RWPE1 (cell line): ENCODE measurements at regions of chr12 and their contacts with region 1.

Region 1: DNA sequence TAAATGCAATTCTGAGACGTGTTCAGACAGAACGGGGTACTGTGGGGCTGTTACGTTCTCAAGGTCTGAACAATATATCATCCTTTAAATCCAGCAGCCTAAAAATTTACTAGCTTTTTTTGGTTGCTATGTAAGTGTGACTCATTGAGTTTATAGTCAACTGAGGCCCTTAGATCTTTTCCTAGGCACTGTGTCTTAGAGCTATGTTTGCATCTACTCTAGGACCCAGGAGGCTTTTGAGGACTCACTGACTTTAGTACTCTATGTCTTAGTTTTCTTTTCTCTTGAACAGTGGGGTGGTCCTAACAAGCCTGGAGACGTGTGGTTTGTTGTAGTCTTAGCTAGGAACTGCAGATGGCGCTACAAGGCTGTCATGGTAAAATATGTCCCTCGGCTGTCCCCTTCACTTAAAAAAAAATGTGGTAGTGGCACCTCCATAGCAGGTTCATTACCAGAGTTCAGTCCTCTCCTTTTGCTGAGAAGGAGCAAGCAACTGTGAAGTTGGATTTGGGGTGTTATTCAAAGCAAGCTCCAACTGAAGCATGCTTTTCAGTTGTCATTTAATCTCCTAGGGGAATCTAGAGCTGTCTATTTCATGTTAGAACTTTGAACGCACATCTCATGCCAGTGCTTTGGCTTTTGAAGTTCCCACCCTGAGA is 8.7 kb upstream of the SPATS2 start:
- DNase-seq: no peak
- H3K27ac ChIP-seq: no peak overlapping the region
- CTCF ChIP-seq: peak; percentile 75

Region 2: DNA sequence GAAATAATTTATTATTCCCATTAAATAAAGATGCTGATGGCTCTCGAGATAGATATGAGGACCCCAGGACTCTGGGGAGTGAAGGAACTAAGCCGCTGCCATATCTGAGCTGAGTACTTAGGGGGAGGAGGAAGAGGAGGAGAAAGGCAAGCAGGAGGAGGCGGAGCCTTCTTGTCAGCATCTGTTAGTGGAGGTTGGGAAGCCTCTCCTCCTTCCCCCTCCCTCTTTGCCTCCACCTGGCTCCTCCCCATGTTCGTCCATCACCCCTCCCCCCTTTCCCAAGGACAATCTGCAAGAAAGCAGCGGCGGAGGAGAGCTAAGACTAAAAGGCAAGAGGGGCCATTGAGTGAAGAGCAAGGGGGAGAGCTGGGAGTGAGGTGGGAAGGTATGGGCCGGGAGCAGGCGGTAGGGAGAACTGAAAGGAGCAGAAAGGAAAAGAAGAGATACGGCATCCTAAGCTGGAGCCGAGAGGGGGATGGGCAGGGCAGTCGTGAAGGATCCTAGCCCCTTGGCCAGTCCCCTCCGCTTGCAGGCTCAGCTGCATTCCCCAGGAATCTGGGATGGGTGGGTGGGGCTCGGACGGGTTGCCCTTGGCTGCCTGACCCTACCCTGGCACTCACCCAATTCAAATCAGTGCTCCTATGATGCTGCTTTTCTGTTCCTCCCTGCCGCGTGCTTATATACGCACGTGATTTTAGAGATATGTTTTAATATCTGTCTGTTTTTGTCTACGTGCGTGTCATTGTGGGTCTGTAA is 1239.4 kb before region 1 on chr12 and contains the start of gene PFKM:
- CTCF ChIA-PET with region 1: no interaction called
- POLR2A ChIA-PET with region 1: no interaction called
- DNase-seq: peak; percentile 97
- H3K27ac ChIP-seq: peak within 1 kb of the TSS; percentile 79
- CTCF ChIP-seq: no peak

Region 3: DNA sequence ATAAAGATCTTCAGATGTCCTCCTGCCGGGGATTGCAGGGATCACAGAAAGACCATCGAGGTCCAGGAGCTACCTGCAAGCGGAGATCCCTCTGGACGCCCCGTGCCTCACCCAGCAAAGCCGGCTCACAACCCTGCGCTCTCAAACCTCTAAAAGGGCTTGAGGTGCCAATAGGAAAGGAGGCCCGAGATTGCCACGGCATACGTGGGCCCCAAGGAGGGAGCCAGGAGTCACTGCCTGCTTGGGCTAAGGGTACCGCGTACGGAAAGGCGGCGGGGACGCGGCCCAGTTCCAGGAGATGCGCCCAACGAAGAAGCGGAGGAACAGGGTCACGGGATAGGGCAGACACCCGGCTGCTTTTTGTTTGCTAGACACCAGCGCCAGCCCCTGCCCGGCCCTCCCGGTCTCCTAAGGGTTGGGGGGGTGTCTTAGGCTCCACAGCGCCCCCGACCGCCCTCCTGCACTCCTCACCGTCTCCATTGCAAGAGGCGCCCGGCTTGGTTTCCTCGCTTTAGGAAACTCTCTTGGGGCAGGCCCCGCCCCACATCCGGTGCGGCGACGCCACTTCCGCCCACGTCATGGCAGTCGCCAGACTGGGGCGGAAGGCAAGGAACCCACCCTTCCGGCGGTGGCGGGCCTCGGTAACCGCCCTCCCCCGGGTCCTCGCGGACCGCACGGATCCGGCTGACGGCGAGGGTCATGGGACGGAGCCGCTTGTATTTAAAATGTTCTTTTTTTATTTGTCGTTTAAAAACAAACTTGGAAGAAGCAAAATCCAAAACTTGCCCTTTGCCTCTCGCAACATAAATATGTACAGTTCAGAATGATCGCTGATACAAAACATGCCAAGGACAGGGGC is 340.1 kb before region 1 on chr12 and contains the start of gene PRKAG1:
- CTCF ChIA-PET with region 1: no interaction called
- POLR2A ChIA-PET with region 1: no interaction called
- DNase-seq: peak; percentile 99
- H3K27ac ChIP-seq: peak within 1 kb of the TSS; percentile 84
- CTCF ChIP-seq: peak; percentile 61

Region 4: DNA sequence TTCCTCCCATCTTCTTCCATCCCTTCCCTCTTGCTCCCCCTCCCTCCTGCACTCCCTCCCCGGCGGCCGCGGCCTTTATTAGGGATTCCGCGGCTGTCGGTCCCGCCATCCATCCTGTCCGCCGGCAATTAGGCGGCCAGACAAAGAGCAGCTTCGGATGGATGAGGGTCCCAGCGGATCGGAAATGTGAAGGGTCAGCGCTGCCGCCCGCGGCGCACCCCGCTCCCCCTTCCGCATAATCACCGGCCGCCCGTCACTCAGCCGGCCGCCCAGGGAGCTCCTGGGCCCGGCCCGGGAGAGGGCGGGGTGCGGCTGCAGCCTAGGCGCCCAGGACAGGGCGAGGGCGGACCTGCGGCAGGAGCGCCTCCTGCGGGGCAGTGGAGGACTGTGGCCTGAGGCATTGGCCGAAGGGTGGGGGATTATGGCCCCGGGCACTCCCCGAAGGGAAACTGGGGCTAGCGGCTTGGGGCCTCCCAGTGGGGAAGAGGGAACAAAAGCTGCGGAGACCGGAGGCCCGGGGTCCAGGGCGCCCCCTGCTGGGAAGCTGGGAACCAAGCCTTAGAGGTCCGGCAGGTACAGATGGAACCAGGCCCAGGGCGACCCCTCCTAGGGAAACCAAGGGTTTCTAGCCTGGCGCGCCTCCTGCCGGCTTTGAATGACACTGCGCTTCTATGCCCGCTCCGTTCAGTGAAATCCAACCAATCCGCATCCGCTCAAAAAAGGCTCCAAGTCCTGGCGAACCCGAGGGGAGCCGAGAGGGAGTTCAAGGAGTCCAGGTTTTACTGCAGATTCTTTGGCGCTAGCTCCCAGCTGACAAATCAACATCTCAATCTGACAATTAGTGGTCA is 16.3 kb before region 1 on chr12:
- CTCF ChIA-PET with region 1: interaction called, 31 read pairs
- POLR2A ChIA-PET with region 1: no interaction called
- DNase-seq: no peak
- H3K27ac ChIP-seq: no peak overlapping the region
- CTCF ChIP-seq: peak; percentile 86

Region 5: GRCh38 chr12:49515266-49515665 is 156.7 kb after region 1 on chr12:
- CTCF ChIA-PET with region 1: interaction called, 92 read pairs
- POLR2A ChIA-PET with region 1: no interaction called
- DNase-seq: peak; percentile 66
- H3K27ac ChIP-seq: peak overlapping the region; percentile 59
- CTCF ChIP-seq: no peak

Region 6: GRCh38 chr12:49559011-49559675 is 200.5 kb after region 1 on chr12:
- CTCF ChIA-PET with region 1: interaction called, 18 read pairs
- POLR2A ChIA-PET with region 1: no interaction called
- DNase-seq: no peak
- H3K27ac ChIP-seq: no peak overlapping the region
- CTCF ChIP-seq: no peak